Activated CD4-positive, alpha-beta T cell treated with anti-CD3 and anti-CD28 coated beads for 36 hours (primary cell): ENCODE measurements at regions of chr17 and their contacts with region 1.

Region 1: GRCh38 chr17:40157973-40158372 is 17.6 kb downstream of the CASC3 start:
- DNase-seq: no peak
- ATAC-seq: no peak
- H3K4me3 Mint-ChIP-seq: no peak overlapping the region
- H3K27ac Mint-ChIP-seq: peak overlapping the region; percentile 24
- H3K4me1 Mint-ChIP-seq: peaks cover 35% of the 10 kb centered on the region
- H3K27me3 Mint-ChIP-seq: no peaks in the 10 kb centered on the region

Region 2: DNA sequence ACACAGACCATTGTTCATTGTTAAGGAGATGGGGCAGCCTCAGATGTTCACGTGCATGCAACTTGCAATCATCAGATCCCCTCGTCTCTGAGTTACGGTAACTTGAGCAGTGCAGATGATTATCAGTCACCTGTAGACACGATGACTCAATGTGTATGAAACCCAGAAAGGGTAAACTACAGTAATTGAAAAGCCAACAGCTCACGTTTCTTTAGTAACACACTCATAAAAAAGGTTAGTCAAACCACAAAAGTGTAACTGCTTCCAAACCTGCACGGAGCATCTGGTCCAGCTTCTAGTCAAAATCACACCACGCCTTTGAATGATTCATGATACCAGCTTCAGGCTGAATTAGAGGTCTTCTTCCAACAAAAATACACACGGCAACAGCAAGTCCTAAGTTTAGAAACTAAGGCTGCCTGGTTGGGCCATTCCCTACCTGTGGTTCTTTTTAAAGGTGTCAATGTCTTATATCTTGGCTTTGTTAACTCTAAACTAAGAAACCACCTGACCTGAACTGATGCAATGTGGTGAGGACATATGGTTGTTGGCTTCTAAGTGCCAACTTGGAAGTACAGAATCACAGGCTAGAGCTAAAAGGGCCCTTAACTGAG is 387.9 kb before region 1 on chr17:
- CTCF ChIA-PET with region 1: no interaction called
- POLR2A ChIA-PET with region 1: no interaction called
- intact Hi-C with region 1: loop called in 1 of 2 experiments (anchors 5 kb)
- DNase-seq: peak; percentile 78
- ATAC-seq: peak; percentile 80
- H3K4me3 Mint-ChIP-seq: peak overlapping the region; percentile 7
- H3K27ac Mint-ChIP-seq: peak overlapping the region; percentile 82
- H3K4me1 Mint-ChIP-seq: peaks cover 96% of the 10 kb centered on the region
- H3K27me3 Mint-ChIP-seq: no peaks in the 10 kb centered on the region